ENCODE measurements at regions of chr7 and their contacts with region 1.

Region 1: DNA sequence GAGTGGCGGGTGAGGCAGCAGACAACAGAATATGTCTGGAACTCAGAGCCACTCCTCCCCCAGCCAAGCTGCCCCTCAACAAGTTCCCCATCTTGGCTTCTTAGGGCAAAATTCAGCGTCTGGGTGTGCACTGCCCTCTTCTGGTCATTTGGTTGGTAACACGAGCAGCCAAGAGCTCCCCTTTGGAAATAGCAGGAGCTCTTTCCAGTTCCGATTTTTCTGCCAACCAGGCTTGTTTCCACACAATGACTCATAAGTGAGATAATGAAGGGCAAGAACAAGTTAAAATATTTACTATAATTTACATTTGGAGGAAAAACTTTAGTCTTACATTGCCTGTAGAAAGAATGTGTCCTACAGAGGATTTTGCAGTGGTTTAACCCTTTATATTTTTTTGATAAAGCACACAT is 70.5 kb downstream of the ADCYAP1R1 start:
- DNase-seq: peak; percentile 63
- H3K4me3 ChIP-seq: no peak overlapping the region
- H3K27ac ChIP-seq: no peak overlapping the region
- H3K4me1 ChIP-seq: no peaks in the 10 kb centered on the region
- H3K27me3 ChIP-seq: peaks cover 5% of the 10 kb centered on the region
- CTCF ChIP-seq: peak; percentile 89 to 91

Region 2: DNA sequence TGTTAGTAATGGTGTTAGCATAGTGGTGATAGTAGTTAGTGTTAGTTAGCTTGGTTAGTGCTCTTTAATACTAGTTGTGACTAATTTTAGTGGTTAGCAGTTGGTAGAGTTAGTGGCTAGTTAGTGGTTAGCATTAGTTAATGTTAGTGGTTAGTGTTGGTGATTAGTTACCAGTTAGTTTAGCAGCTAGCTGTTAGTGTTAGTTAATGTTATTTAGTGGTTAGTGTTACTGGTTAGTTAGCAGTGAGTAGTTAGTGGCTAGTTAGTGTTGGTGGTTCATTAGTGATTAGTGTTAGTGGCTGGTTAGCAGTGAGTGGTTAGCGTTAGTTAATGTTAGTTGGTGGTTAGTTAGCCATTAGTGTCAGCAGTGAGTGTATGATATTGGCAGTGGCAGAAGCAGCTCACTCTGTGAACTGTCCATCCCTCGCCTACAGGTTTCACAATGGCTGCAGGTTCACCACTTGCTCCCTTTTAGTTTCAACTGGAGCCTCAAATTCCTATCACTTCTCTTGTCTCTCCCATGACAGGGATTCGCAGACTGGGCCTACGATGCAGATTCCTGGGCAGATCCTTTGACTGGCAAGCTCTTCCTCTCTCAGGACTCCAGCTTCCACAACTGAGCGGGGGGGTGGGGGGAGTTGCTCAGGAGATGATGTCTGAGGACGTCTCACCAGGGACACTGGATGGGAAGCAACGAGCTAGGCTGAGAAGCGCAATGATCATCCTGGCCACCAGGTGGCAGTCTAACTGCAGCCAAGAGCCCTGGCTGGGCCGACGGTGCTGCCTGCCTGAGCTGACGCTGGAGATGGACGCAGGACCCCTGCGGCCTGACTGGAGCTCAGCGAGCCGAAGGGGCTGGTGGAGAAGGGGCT is 139.4 kb before region 1 on chr7:
- CTCF ChIA-PET with region 1: interaction called, 50 read pairs
- dilution Hi-C with region 1: no loop called
- in situ Hi-C with region 1: loop called (anchors 5 kb)
- intact Hi-C with region 1: loop called (anchors 1 kb)
- DNase-seq: peak; percentile 62
- H3K4me3 ChIP-seq: no peak overlapping the region
- H3K27ac ChIP-seq: no peak overlapping the region
- H3K4me1 ChIP-seq: no peaks in the 10 kb centered on the region
- H3K27me3 ChIP-seq: no peaks in the 10 kb centered on the region
- CTCF ChIP-seq: peak; percentile 77 to 94

Region 3: DNA sequence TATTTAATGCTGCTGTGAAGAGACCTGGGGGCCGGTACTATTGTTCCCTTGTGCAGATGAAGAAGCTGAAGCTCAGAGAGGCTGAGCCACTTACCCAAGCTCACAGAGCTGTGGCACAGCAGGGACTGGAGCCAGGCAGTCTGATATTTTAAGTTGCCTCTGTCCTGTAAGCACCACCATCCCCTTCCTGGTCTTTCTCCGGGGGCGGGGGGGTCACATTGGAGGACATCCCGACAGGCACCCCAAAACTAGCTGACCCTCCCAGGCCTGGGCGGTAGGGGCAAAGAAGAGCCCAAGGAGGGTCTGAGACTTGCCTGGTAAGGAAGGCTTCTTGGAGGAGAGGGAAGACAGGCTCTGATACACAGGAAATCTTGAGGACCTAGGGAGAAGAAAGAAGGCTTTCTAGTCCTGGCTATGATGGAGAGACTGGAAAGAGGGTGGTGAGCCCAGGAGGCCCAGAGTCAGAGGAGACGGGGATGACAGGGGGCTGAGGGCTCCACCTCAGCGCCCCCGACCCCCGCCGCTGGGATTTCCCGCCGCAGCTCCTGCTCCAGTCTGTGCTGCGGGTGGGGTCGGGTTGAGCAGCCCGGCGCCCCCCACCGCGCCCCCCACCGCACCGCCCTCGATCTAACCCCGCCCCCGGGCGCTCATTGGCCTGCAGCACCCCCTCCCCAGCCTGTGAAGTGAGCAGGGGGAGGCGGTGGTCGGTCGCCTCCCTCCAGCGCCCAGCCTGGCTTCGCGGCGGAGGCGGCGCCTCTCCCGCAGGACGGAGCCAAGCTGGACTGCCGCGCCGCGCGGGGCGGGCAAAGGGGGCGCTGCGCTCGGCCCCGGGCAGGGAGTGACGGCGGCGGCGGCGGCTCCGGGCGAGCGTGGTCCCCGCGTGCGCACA is 70.8 kb before region 1 on chr7 and contains the start of gene ADCYAP1R1:
- CTCF ChIA-PET with region 1: no interaction called
- dilution Hi-C with region 1: no loop called
- in situ Hi-C with region 1: no loop called
- intact Hi-C with region 1: no loop called
- DNase-seq: no peak
- H3K4me3 ChIP-seq: no peak within 1 kb of the TSS
- H3K27ac ChIP-seq: no peak within 1 kb of the TSS
- H3K4me1 ChIP-seq: no peaks in the 10 kb centered on the region
- H3K27me3 ChIP-seq: peaks cover 24% of the 10 kb centered on the region
- CTCF ChIP-seq: no peak
- total RNA-seq, gene ADCYAP1R1: not detected